ENCODE measurements at regions of chr15 and their contacts with region 1.

Region 1: DNA sequence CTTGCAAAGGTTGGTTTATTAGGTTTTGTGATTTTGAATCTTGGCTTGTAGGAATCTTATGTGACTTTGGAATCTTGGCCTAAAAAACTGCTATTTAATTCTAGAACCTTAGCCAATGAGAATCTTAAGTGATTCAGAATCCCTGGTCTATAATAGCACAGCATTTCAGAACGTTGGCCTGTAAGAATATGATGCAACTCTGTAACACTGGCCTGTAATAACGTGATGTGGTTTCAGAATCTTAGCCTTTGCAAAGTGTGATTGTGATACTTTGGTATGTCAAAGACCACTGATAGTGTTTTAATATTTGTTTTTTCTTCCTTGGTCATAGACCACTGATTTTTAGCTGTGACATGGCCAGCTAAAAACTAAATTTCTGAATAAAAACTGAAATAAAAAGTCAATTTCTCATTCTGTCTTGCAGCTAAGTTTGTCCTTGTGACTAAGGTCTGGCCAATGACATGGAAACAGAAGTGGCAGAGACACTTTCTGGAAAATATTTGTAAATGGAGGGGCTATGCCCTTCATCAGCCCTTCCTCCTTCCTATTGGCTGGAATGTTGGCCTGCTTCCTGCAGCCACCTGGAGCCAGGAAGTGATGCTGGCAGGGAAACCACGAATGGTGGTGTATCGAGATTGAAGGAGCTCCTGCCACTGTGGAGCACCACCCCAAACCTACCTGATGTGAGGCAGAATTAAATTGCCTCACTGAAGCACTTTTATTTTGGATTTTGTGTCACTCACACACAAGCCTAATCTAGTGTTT is 42.3 kb upstream of the CORO2B start:
- DNase-seq: no peak
- ATAC-seq: no peak
- H3K4me3 ChIP-seq: no peak overlapping the region
- H3K4me3 Mint-ChIP-seq: no peak overlapping the region
- H3K27ac ChIP-seq: no peak overlapping the region
- H3K27ac Mint-ChIP-seq: no peak overlapping the region
- H3K4me1 ChIP-seq: no peaks in the 10 kb centered on the region
- H3K4me1 Mint-ChIP-seq: no peaks in the 10 kb centered on the region
- H3K27me3 ChIP-seq: peaks cover 2 to 4% of the 10 kb centered on the region in 2 experiments
- H3K27me3 Mint-ChIP-seq: peaks cover 21% of the 10 kb centered on the region
- CTCF ChIP-seq: no peak

Region 2: DNA sequence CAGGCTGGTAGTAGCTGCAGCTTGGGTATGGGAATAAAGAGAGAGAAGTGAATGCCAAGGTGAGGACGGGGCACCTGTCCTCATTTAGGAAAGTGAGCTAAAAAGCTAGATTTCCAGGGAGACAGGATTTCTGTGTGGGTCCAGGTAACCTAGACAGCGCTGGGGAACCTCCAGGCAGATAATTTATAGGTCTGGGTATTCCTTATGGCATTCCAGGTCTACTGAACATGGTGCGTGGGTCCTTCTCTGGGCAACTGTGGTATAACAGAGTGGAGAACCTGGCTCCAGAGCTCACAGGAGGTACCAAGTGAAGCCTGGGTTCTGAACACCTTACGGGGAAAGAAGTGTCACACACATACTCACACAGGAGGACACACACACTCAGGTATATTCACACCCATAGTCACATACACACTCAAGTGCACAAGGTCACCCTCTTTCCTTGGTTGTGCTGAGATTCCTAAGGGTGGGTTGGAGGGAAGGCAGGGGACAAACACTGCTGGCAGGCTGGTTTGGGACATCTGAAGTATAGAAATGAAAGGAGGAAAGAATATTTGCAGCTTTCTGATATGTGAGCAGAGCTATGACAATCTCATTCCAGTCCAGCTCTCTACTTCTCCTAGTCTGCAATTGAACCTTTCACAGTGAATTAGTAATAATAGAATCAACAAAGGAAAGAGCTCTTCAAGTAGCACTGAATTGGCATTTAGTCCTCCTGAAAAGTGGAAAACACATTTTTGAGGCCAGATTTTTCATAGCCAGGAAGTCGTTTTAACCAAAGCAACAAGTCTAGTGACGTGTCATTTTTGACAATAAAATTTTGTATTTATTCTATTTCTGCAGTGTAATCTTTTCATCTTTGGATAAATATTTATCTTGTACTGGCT is 67.1 kb before region 1 on chr15:
- CTCF ChIA-PET with region 1: no interaction called
- POLR2A ChIA-PET with region 1: no interaction called
- intact Hi-C with region 1: loop called in 1 of 2 experiments (anchors 2 kb)
- DNase-seq: no peak
- ATAC-seq: no peak
- H3K4me3 ChIP-seq: no peak overlapping the region
- H3K4me3 Mint-ChIP-seq: no peak overlapping the region
- H3K27ac ChIP-seq: no peak overlapping the region
- H3K27ac Mint-ChIP-seq: no peak overlapping the region
- H3K4me1 ChIP-seq: no peaks in the 10 kb centered on the region
- H3K4me1 Mint-ChIP-seq: no peaks in the 10 kb centered on the region
- H3K27me3 ChIP-seq: no peaks in the 10 kb centered on the region
- H3K27me3 Mint-ChIP-seq: peaks cover 3% of the 10 kb centered on the region
- CTCF ChIP-seq: no peak